T-cell (primary cell): ENCODE measurements at regions of chr1 and their contacts with region 1.

Region 1: GRCh38 chr1:178789201-178789600 is 64.2 kb downstream of the RALGPS2 start:
- DNase-seq: no peak
- ATAC-seq: no peak
- H3K4me3 ChIP-seq: no peak overlapping the region
- H3K4me3 Mint-ChIP-seq: no peak overlapping the region
- H3K27ac ChIP-seq: no peak overlapping the region
- H3K27ac Mint-ChIP-seq: no peak overlapping the region
- H3K4me1 ChIP-seq: peaks cover 0 to 3% of the 10 kb centered on the region in 2 experiments
- H3K4me1 Mint-ChIP-seq: peaks cover 0 to 4% (median 0%) of the 10 kb centered on the region in 3 donors
- H3K27me3 ChIP-seq: no peaks in the 10 kb centered on the region
- H3K27me3 Mint-ChIP-seq: no peaks in the 10 kb centered on the region

Region 2: DNA sequence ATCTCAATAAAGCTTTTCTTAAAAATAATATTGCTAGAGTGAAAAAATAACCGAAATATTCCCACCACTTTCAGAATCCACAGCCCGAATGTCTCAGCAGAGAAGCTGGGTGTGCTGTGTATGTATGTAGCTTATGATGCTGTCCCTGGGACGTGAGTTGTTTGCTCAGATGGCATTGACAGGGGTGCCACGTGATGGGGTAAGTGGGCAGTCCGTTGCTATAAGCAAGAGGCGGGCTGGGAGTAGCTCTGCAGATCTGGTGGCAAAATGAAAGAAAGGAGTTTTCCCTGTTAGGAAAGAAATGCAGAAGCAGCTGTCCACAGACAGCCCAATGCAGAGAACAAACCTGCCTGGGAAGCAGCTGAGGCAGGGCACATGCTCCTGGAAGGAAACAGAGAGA is 232.7 kb after region 1 on chr1:
- CTCF ChIA-PET with region 1: no interaction called
- POLR2A ChIA-PET with region 1: interaction called in 1 of 2 experiments, 12 read pairs
- DNase-seq: no peak
- ATAC-seq: no peak
- H3K4me3 ChIP-seq: no peak overlapping the region
- H3K4me3 Mint-ChIP-seq: no peak overlapping the region
- H3K27ac ChIP-seq: no peak overlapping the region
- H3K27ac Mint-ChIP-seq: no peak overlapping the region
- H3K4me1 ChIP-seq: peaks cover 4 to 14% of the 10 kb centered on the region in 2 experiments
- H3K4me1 Mint-ChIP-seq: peaks cover 18 to 20% (median 18%) of the 10 kb centered on the region in 3 donors
- H3K27me3 ChIP-seq: peaks cover 0 to 6% of the 10 kb centered on the region in 2 experiments
- H3K27me3 Mint-ChIP-seq: peaks cover 0 to 4% of the 10 kb centered on the region in 2 donors

Region 3: DNA sequence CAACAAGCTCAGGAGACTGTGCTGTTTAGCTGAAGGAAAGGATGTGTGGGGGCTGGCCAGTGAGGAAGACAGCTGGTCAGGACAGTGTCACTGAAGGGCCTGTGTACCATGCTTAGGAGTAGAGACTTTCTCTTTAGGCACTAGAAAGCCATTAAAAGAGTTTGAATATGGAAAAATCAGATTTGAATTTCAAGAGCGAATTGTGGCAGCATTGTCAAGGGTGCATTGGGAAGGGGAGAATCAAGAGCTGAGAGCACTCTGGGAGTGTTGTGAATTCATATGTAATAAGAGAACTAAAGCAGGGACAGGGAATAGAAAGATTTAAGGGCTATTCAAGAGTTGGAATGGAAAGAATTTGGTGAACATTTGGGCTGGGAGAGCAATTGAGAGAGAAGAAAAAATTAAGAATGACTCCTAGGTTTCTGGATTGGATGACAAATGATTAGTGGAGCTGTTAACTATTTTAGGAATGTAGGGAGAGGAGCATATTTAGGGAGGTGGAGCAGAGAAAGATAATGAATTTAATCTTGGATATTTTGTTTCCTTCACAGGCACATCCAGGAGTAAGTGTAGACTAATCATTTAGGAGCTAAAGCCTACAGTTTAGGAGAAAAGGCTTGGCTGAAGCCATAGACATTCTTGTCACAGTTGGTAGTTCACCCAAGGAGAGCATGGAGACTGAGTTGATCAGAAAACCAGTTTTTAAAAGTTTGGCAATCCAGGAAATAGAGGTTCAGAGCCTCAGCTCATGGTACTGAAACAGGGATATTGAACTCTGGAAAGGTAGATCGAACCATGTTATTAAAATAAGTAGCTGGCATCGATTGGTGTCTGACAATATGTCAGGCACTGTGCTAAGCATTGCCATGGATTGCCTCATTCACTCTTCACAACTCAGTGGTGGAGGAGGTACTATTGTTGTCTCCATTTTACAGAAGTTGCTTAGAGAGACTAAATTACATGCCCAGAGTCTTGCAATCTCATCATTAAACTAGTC is 269.6 kb after region 1 on chr1:
- CTCF ChIA-PET with region 1: no interaction called
- POLR2A ChIA-PET with region 1: no interaction called
- DNase-seq: no peak
- ATAC-seq: no peak
- H3K4me3 ChIP-seq: no peak overlapping the region
- H3K4me3 Mint-ChIP-seq: no peak overlapping the region
- H3K27ac ChIP-seq: no peak overlapping the region
- H3K27ac Mint-ChIP-seq: peak overlapping the region in 1 of 2 donors; percentile 1
- H3K4me1 ChIP-seq: no peaks in the 10 kb centered on the region
- H3K4me1 Mint-ChIP-seq: no peaks in the 10 kb centered on the region
- H3K27me3 ChIP-seq: no peaks in the 10 kb centered on the region
- H3K27me3 Mint-ChIP-seq: no peaks in the 10 kb centered on the region